A673 (cell line): ENCODE measurements at regions of chr10 and their contacts with region 1.

Region 1: GRCh38 chr10:117496616-117497028 is 45.9 kb upstream of the EMX2 start:
- DNase-seq: peak; percentile 84
- H3K4me3 ChIP-seq: no peak overlapping the region
- H3K27ac ChIP-seq: no peak overlapping the region
- H3K4me1 ChIP-seq: no peaks in the 10 kb centered on the region
- H3K27me3 ChIP-seq: peaks cover 39% of the 10 kb centered on the region
- CTCF ChIP-seq: peak; percentile 96

Region 2: DNA sequence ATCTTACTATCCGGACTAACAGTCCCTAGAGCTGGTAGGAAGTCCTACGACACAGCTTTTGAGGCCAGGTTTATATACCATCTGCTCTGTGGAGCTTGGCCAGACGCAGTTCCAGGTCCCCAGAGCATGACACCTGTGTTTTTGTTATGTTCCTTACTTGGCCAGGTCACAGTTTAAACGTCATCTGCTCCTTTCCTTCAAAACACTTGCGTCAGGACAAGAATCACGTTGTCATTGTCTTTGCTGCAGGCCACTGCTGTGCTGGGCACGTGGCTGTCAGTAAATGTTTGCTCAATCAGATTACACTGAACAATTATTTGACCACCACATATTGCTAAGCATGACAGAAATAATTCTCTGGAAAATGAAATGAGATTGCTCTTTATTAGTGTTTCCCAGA is 231.8 kb before region 1 on chr10:
- CTCF ChIA-PET with region 1: no interaction called
- POLR2A ChIA-PET with region 1: no interaction called
- intact Hi-C with region 1: no loop called
- DNase-seq: no peak
- H3K4me3 ChIP-seq: no peak overlapping the region
- H3K27ac ChIP-seq: no peak overlapping the region
- H3K4me1 ChIP-seq: no peaks in the 10 kb centered on the region
- H3K27me3 ChIP-seq: no peaks in the 10 kb centered on the region
- CTCF ChIP-seq: no peak

Region 3: DNA sequence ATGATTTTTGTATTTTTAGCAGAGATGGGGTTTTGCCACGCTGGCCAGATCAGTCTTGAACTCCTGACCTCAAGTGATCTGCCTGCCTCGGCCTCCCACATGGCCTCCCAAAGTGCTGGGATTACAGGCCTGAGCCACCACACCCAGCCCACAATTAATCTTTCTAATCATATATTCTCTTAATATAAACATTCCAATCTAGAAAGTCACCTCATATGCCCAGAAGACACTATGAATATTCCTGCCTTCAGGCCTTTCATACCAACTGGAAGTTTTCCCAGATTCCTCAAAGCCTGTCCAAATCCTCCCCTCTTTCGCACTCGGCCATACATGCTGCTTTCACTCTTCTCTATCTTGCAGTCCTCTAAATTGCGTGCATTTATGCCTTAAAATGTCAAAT is 154.0 kb before region 1 on chr10:
- CTCF ChIA-PET with region 1: no interaction called
- POLR2A ChIA-PET with region 1: no interaction called
- intact Hi-C with region 1: no loop called
- DNase-seq: peak; percentile 10
- H3K4me3 ChIP-seq: no peak overlapping the region
- H3K27ac ChIP-seq: no peak overlapping the region
- H3K4me1 ChIP-seq: peaks cover 27% of the 10 kb centered on the region
- H3K27me3 ChIP-seq: no peaks in the 10 kb centered on the region
- CTCF ChIP-seq: no peak

Region 4: GRCh38 chr10:117462816-117463544 is 33.6 kb before region 1 on chr10:
- CTCF ChIA-PET with region 1: interaction called, 20 read pairs
- POLR2A ChIA-PET with region 1: no interaction called
- intact Hi-C with region 1: no loop called
- DNase-seq: no peak
- H3K4me3 ChIP-seq: no peak overlapping the region
- H3K27ac ChIP-seq: no peak overlapping the region
- H3K4me1 ChIP-seq: no peaks in the 10 kb centered on the region
- H3K27me3 ChIP-seq: no peaks in the 10 kb centered on the region
- CTCF ChIP-seq: no peak

Region 5: GRCh38 chr10:117865945-117866344 is 369.3 kb after region 1 on chr10:
- CTCF ChIA-PET with region 1: no interaction called
- POLR2A ChIA-PET with region 1: no interaction called
- intact Hi-C with region 1: no loop called
- DNase-seq: peak; percentile 35
- H3K4me3 ChIP-seq: no peak overlapping the region
- H3K27ac ChIP-seq: no peak overlapping the region
- H3K4me1 ChIP-seq: no peaks in the 10 kb centered on the region
- H3K27me3 ChIP-seq: peaks cover 33% of the 10 kb centered on the region
- CTCF ChIP-seq: no peak

Region 6: DNA sequence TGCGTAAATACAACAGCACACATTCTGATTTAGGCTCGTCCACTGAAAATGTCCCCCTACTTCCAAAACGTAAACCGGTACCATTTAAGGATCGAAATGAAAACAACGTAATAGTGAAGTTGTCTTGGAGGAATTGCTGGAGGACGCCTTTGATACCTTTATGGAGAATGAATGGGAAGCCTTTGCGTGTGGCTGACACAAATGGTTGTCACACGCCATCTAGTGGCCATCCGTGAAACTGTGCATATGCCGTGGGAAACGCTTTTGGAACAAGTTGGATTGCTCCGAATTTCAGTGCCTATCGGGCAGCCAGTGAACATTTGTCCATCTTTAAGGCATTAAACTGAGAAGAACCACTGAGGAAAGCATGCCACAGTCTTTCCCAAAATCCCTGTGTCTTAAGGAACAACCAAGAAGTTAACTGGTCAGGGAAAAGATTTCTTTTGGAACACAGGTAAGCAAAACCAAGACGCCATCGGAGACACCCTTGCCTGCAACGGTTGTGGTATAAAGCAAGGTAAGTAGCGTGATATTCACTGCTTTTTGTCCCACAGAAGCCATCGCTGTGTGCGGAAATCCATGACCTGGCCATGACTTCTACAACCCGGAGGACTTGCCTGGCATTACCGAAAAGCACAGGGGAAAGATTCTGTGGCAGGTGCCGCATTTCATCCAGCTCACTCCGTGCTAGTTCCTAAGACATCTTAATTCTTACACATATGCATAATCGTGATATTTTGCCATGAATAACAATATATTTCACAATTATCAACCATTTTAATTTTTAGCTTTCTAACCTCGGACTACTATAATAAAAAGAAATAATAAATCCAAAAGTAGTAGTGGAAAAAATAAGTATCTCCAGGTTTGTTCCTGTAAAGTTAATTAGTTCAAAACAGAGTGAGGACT is 744.9 kb after region 1 on chr10:
- CTCF ChIA-PET with region 1: interaction called, 10 read pairs
- POLR2A ChIA-PET with region 1: no interaction called
- intact Hi-C with region 1: loop called (anchors 1 kb)
- DNase-seq: peak; percentile 82
- H3K4me3 ChIP-seq: no peak overlapping the region
- H3K27ac ChIP-seq: no peak overlapping the region
- H3K4me1 ChIP-seq: no peaks in the 10 kb centered on the region
- H3K27me3 ChIP-seq: peaks cover 93% of the 10 kb centered on the region
- CTCF ChIP-seq: peak; percentile 90

Region 7: DNA sequence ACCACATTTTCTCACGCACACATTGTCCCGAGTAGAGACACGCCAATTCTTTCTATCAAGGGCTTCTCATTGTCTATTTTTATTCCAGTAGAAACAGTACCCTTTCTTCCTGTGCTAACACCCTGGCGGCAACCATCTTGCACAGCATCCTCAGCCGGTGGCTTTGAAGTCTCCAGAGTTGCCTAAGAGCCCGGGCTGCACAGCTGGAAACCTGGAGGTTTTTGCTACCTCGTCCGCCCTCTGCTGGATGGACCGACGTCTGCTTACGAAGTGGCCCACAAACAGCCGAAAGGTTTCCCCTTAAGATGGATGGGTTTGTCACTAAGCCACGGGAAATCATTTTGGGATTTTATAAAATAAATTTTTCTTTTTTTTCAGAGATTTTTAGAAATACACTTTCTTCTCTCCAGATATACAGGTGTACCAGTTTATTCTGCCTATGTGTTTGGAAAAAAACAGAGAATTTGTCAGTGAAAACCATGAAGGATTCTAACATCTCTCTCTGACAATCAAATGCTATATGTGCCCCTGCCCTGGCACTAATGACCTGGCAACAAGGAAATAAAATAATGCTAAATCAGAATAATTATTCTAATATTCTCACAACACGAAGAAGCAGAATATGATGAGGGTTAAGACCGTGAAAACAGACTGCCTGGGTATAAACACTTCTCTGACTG is 927.3 kb after region 1 on chr10:
- CTCF ChIA-PET with region 1: no interaction called
- POLR2A ChIA-PET with region 1: no interaction called
- intact Hi-C with region 1: loop called (anchors 1 kb)
- DNase-seq: peak; percentile 91
- H3K4me3 ChIP-seq: no peak overlapping the region
- H3K27ac ChIP-seq: no peak overlapping the region
- H3K4me1 ChIP-seq: no peaks in the 10 kb centered on the region
- H3K27me3 ChIP-seq: peaks cover 14% of the 10 kb centered on the region
- CTCF ChIP-seq: peak; percentile 84

Region 8: GRCh38 chr10:118543714-118544400 is 1047.2 kb after region 1 on chr10:
- CTCF ChIA-PET with region 1: no interaction called
- POLR2A ChIA-PET with region 1: no interaction called
- intact Hi-C with region 1: loop called (anchors 10 kb)
- DNase-seq: peak; percentile 40
- H3K4me3 ChIP-seq: no peak overlapping the region
- H3K27ac ChIP-seq: no peak overlapping the region
- H3K4me1 ChIP-seq: no peaks in the 10 kb centered on the region
- H3K27me3 ChIP-seq: peaks cover 5% of the 10 kb centered on the region
- CTCF ChIP-seq: peak; percentile 68

Region 9: DNA sequence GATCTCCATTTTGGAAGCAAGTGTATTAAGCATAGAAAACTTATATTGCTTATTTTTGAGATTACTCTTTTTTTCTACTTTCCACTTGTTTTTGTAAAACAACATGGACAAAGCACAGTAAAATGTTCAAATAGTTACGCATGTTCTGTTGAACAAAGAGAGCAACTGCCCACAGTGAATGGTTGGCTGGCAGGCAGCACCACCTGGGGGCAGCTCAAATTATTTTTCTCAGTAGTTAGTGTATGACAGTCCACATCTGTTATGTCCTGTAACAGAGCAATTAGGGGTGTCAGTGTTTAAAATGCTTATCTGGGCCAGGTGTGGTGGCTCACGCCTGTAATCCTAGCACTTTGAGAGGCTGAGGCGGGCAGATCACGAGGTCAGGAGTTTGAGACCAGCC is 1304.3 kb after region 1 on chr10:
- CTCF ChIA-PET with region 1: no interaction called
- POLR2A ChIA-PET with region 1: no interaction called
- intact Hi-C with region 1: no loop called
- DNase-seq: peak; percentile 15
- H3K4me3 ChIP-seq: no peak overlapping the region
- H3K27ac ChIP-seq: no peak overlapping the region
- H3K4me1 ChIP-seq: no peaks in the 10 kb centered on the region
- H3K27me3 ChIP-seq: peaks cover 25% of the 10 kb centered on the region
- CTCF ChIP-seq: peak; percentile 49